Gastrocnemius medialis (tissue), 4 donors: ENCODE measurements at regions of chr1 and their contacts with region 1.

Region 1: DNA sequence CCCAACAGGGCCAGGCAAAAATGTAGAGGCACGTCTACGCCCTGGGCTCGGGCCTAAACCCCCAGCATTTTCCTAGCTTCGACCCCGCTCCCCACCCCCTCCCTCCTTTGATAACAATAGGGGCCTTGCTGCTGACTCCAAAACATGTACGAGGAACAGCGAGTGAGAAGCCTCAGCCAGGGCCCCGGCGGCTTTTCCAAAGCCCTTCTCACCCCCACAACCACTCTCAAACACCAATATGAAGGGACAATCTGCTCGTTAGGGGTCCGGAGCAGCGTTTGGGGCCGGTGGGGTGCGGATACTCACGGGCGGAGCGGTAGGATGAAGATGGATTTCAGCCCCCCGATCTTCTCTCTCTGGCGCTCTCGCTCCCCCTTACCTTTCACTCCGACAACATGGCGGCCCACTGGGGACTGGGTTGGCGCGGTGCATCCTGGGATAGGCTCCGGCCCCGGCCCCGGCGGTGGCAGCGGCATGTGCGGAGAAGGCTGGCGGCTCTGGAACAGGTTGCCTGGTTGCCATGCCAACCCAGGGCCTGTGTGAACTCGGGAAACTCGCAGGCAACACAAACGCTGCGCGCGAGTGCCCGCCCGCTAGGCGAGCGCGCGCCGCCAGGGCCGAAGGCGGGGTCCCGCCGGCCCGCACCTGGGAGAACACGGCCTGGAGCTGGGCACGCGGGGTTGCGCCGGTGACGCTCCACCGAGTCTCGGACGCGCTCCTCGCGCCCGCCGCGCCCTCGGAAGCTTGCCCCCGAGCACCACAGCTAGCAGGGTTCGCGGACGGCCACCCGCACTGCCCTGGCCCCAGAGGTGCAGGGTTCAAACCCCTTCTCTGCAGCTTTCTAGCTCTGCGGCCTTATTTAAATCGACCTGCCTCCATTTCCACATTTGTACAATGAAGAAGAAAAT is at the start of gene PUM1:
- DNase-seq: peak; percentile 98
- ATAC-seq: peak; percentile 95 to 97
- H3K4me3 ChIP-seq: peak within 1 kb of the TSS; percentile 79 to 91 (median 80)
- H3K27ac ChIP-seq: peak within 1 kb of the TSS; percentile 92 to 97 (median 94)
- H3K4me1 ChIP-seq: peaks cover 31 to 32% of the 10 kb centered on the region in 2 donors
- H3K27me3 ChIP-seq: no peaks in the 10 kb centered on the region
- CTCF ChIP-seq: peak; percentile 11 to 45 (median 16)
- POLR2A ChIP-seq: peak; percentile 83 to 87
- total RNA-seq, gene PUM1: 56.7 to 111 (median 76.4) TPM

Region 2: GRCh38 chr1:30982937-30983336 is 82.6 kb before region 1 on chr1:
- in situ Hi-C with region 1: no loop called
- intact Hi-C with region 1: loop called (anchors 2 kb)
- DNase-seq: peak; percentile 35 to 49
- ATAC-seq: peak; percentile 93 to 94
- H3K4me3 ChIP-seq: peak overlapping the region in 1 of 4 donors; percentile 26
- H3K27ac ChIP-seq: peak overlapping the region; percentile 67 to 82 (median 77)
- H3K4me1 ChIP-seq: peaks cover 59 to 61% of the 10 kb centered on the region in 2 donors
- H3K27me3 ChIP-seq: no peaks in the 10 kb centered on the region
- CTCF ChIP-seq: peak in 4 of 5 experiments; percentile 18 to 56 (median 33)
- POLR2A ChIP-seq: no peak

Region 3: DNA sequence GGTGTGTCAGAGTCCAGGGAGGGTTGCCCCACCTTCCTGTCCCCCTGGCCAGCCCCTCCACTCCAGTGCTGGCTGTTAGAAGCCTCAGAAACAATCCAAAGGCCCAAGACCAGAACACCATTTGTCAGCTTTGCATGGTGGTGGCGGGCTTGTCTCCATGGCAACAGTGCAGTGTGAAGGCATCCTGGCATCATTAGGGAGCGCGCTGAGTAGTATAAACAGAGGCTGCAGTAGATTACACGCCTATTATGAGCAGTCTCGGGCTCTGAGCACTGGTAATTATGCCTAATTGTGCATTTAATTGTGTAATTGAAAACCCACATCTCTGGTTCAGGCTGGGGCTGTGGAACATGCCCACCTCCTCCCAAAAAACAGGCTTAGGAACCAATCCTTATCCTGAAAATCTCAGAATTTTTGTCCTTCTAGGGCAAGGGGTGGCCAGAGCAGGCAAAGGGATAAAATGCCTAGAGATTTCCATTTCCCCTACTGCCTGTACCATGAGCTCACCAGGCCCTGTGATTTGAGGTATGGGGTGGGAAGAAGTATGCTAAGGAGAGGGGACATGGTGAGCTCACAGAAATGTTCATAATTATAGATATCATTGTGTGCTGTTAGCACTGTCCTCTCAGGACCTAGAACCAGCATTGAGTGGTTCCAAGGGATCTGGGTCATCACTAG is 162.5 kb after region 1 on chr1:
- in situ Hi-C with region 1: no loop called
- intact Hi-C with region 1: no loop called
- DNase-seq: no peak
- ATAC-seq: no peak
- H3K4me3 ChIP-seq: no peak overlapping the region
- H3K27ac ChIP-seq: no peak overlapping the region
- H3K4me1 ChIP-seq: no peaks in the 10 kb centered on the region
- H3K27me3 ChIP-seq: no peaks in the 10 kb centered on the region
- CTCF ChIP-seq: no peak
- POLR2A ChIP-seq: no peak

Region 4: DNA sequence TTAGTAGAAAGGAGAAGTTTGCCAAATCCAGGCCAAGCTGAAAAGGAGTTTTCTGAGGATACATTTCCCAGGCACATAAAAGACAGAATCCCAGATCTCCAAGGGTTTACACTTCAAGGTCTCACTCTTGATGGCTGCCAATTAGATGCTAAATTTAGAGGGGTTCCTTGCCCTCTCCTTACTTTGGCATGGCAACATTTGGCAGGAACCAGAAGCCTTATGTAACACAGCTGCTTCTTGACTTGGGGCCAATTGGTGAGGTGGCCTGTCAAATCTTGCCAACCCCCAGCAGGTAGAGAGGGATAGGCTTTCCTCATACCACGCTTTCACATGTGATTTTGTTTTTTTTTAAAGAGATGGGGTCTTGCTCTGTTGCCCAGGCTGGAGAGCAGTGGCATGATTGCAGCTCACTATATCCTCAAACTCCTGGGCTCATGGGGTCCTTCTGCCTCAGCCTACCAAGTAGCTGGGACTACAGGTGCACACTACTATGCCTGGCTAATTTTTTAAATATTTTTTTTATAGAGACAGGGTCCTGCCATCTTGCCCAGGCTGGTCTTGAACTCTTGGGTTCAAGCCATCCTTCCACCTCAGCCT is 199.3 kb after region 1 on chr1:
- in situ Hi-C with region 1: no loop called
- intact Hi-C with region 1: no loop called
- DNase-seq: peak; percentile 22 to 60
- ATAC-seq: peak; percentile 71 to 81
- H3K4me3 ChIP-seq: no peak overlapping the region
- H3K27ac ChIP-seq: peak overlapping the region; percentile 54 to 70 (median 57)
- H3K4me1 ChIP-seq: peaks cover 25 to 35% of the 10 kb centered on the region in 2 donors
- H3K27me3 ChIP-seq: no peaks in the 10 kb centered on the region
- CTCF ChIP-seq: no peak
- POLR2A ChIP-seq: no peak

Region 5: DNA sequence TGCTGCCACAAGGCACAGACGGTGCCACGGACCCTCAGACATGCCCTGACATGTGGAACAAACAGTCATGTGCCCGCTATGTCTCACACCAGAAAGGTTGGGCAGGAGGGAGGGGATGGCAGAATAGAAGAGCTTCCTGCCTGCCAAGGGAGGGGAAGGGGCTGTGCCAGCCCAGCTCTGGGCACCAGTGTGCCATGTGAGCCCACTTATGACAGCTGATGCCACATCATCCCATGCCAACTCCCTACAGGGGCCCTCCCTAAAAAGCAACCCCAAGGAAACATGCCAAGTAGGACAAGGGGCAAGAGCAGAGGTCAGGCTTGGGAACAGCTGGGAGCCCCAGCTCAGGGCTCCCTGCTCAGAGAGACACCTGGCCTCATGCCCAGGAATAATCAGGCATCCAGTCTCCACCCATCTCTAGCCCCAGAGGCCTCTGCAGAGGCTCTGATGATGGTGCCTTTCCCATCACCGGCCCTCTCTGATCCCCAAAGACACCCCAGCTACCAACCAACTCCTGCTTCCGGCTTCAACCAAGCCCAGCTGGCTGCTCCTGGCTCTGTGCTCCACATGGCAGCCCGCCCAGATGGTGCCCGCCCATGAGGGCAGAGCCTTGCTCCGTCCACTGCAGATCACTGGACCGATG is 688.3 kb after region 1 on chr1:
- in situ Hi-C with region 1: no loop called
- intact Hi-C with region 1: no loop called
- DNase-seq: peak in 1 of 2 donors; percentile 54
- ATAC-seq: peak in 1 of 2 donors; percentile 63
- H3K4me3 ChIP-seq: no peak overlapping the region
- H3K27ac ChIP-seq: peak overlapping the region in 1 of 4 donors; percentile 65
- H3K4me1 ChIP-seq: peaks cover 16 to 45% of the 10 kb centered on the region in 2 donors
- H3K27me3 ChIP-seq: no peaks in the 10 kb centered on the region
- CTCF ChIP-seq: no peak
- POLR2A ChIP-seq: no peak